A673 (cell line): ENCODE measurements at regions of chr12 and their contacts with region 1.

Region 1: GRCh38 chr12:47397664-47398281 is 308.1 kb downstream of the RPAP3 start:
- DNase-seq: peak; percentile 87
- H3K4me3 ChIP-seq: no peak overlapping the region
- H3K27ac ChIP-seq: no peak overlapping the region
- H3K4me1 ChIP-seq: peaks cover 10% of the 10 kb centered on the region
- H3K27me3 ChIP-seq: no peaks in the 10 kb centered on the region
- CTCF ChIP-seq: peak; percentile 90

Region 2: GRCh38 chr12:47079468-47079980 is 318.2 kb before region 1 on chr12 and contains the starts of genes AMIGO2 and PCED1B:
- CTCF ChIA-PET with region 1: interaction called, 3 read pairs
- POLR2A ChIA-PET with region 1: no interaction called
- intact Hi-C with region 1: loop called (anchors 5 kb)
- DNase-seq: peak; percentile 82
- H3K4me3 ChIP-seq: peak within 1 kb of the TSS; percentile 69
- H3K27ac ChIP-seq: peak within 1 kb of the TSS; percentile 67
- H3K4me1 ChIP-seq: peaks cover 48% of the 10 kb centered on the region
- H3K27me3 ChIP-seq: no peaks in the 10 kb centered on the region
- CTCF ChIP-seq: peak; percentile 44
- total RNA-seq, gene AMIGO2: 10.9 and 16.7 TPM in 2 replicates
- total RNA-seq, gene PCED1B: 2.1 and 3.1 TPM in 2 replicates

Region 3: GRCh38 chr12:47274760-47275159 is 123.0 kb before region 1 on chr12:
- CTCF ChIA-PET with region 1: interaction called, 11 read pairs
- POLR2A ChIA-PET with region 1: no interaction called
- intact Hi-C with region 1: no loop called
- DNase-seq: no peak
- H3K4me3 ChIP-seq: no peak overlapping the region
- H3K27ac ChIP-seq: no peak overlapping the region
- H3K4me1 ChIP-seq: peaks cover 29% of the 10 kb centered on the region
- H3K27me3 ChIP-seq: no peaks in the 10 kb centered on the region
- CTCF ChIP-seq: no peak

Region 4: GRCh38 chr12:47312808-47313426 is 84.9 kb before region 1 on chr12:
- CTCF ChIA-PET with region 1: interaction called, 9 read pairs
- POLR2A ChIA-PET with region 1: no interaction called
- intact Hi-C with region 1: loop called (anchors 5 kb)
- DNase-seq: no peak
- H3K4me3 ChIP-seq: no peak overlapping the region
- H3K27ac ChIP-seq: no peak overlapping the region
- H3K4me1 ChIP-seq: peaks cover 7% of the 10 kb centered on the region
- H3K27me3 ChIP-seq: no peaks in the 10 kb centered on the region
- CTCF ChIP-seq: no peak

Region 5: GRCh38 chr12:47323802-47324201 is 74.0 kb before region 1 on chr12:
- CTCF ChIA-PET with region 1: interaction called, 11 read pairs
- POLR2A ChIA-PET with region 1: no interaction called
- intact Hi-C with region 1: no loop called
- DNase-seq: no peak
- H3K4me3 ChIP-seq: no peak overlapping the region
- H3K27ac ChIP-seq: no peak overlapping the region
- H3K4me1 ChIP-seq: no peaks in the 10 kb centered on the region
- H3K27me3 ChIP-seq: no peaks in the 10 kb centered on the region
- CTCF ChIP-seq: no peak

Region 6: GRCh38 chr12:47370420-47370819 is 27.4 kb before region 1 on chr12:
- CTCF ChIA-PET with region 1: no interaction called
- POLR2A ChIA-PET with region 1: no interaction called
- intact Hi-C with region 1: no loop called
- DNase-seq: no peak
- H3K4me3 ChIP-seq: no peak overlapping the region
- H3K27ac ChIP-seq: no peak overlapping the region
- H3K4me1 ChIP-seq: no peaks in the 10 kb centered on the region
- H3K27me3 ChIP-seq: no peaks in the 10 kb centered on the region
- CTCF ChIP-seq: no peak

Region 7: GRCh38 chr12:48472259-48472658 is 1074.5 kb after region 1 on chr12 and contains the start of gene ANP32D:
- CTCF ChIA-PET with region 1: no interaction called
- POLR2A ChIA-PET with region 1: no interaction called
- intact Hi-C with region 1: no loop called
- DNase-seq: no peak
- H3K4me3 ChIP-seq: no peak within 1 kb of the TSS
- H3K27ac ChIP-seq: no peak within 1 kb of the TSS
- H3K4me1 ChIP-seq: no peaks in the 10 kb centered on the region
- H3K27me3 ChIP-seq: no peaks in the 10 kb centered on the region
- CTCF ChIP-seq: no peak
- total RNA-seq, gene ANP32D: not detected in 2 replicates